Ascending aorta (tissue), 2 donors: ENCODE measurements at regions of chr17 and their contacts with region 1.

Region 1: GRCh38 chr17:27332485-27333409 is 38.8 kb downstream of the WSB1 start:
- DNase-seq: peak; percentile 95 to 99
- H3K4me3 ChIP-seq: peak overlapping the region; percentile 55 to 57
- H3K27ac ChIP-seq: peak overlapping the region; percentile 92 to 93
- H3K4me1 ChIP-seq: peaks cover 0 to 16% of the 10 kb centered on the region in 2 donors
- H3K27me3 ChIP-seq: no peaks in the 10 kb centered on the region
- CTCF ChIP-seq: peak; percentile 84 to 95 (median 87)

Region 2: GRCh38 chr17:27236717-27237315 is 95.9 kb before region 1 on chr17:
- intact Hi-C with region 1: loop called (anchors 1 kb)
- DNase-seq: peak in 1 of 2 donors; percentile 94
- H3K4me3 ChIP-seq: no peak overlapping the region
- H3K27ac ChIP-seq: no peak overlapping the region
- H3K4me1 ChIP-seq: peaks cover 0 to 7% of the 10 kb centered on the region in 2 donors
- H3K27me3 ChIP-seq: no peaks in the 10 kb centered on the region
- CTCF ChIP-seq: peak; percentile 87 to 92 (median 89)

Region 3: GRCh38 chr17:27245230-27245696 is 87.5 kb before region 1 on chr17:
- intact Hi-C with region 1: loop called (anchors 1 kb)
- DNase-seq: peak; percentile 79 to 93
- H3K4me3 ChIP-seq: peak overlapping the region; percentile 52 to 56
- H3K27ac ChIP-seq: peak overlapping the region; percentile 90 to 94
- H3K4me1 ChIP-seq: peaks cover 4 to 37% of the 10 kb centered on the region in 2 donors
- H3K27me3 ChIP-seq: no peaks in the 10 kb centered on the region
- CTCF ChIP-seq: peak; percentile 61 to 76 (median 70)

Region 4: DNA sequence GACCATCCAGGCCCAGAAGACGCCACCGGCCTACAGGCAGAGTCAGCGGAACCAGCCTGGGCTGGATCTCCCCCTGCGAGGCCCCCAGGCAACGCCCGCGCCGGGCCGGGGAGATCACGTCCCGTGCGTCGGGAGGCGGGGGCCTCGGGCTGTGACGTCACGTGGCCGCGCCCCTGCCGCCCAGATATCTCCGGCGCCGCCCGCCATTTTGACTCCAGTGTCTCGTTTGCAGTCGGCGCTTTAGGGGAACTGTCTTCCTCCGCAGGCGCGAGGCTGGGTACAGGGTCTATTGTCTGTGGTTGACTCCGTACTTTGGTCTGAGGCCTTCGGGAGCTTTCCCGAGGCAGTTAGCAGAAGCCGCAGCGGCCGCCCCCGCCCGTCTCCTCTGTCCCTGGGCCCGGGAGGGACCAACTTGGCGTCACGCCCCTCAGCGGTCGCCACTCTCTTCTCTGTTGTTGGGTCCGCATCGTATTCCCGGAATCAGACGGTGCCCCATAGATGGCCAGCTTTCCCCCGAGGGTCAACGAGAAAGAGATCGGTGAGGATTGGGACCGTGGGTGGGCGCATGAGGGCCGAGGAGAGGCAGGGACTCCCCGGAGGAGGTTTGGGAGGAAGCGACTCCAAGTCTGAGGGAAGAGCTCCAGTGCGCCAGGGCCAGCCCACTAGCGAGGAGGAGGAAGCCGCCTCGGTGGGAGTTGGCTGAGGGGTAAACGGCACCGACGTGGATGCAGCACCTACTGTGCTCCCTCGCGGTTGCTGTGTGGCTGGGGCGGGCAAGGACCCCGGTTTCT is 38.7 kb before region 1 on chr17 and contains the start of gene WSB1:
- intact Hi-C with region 1: loop called (anchors 1 kb)
- DNase-seq: peak; percentile 78 to 96
- H3K4me3 ChIP-seq: peak within 1 kb of the TSS; percentile 72 to 76
- H3K27ac ChIP-seq: peak within 1 kb of the TSS; percentile 98 to 99
- H3K4me1 ChIP-seq: peaks cover 13 to 28% of the 10 kb centered on the region in 2 donors
- H3K27me3 ChIP-seq: no peaks in the 10 kb centered on the region
- CTCF ChIP-seq: no peak
- total RNA-seq, gene WSB1: 176 TPM

Region 5: GRCh38 chr17:27315322-27315721 is 17.4 kb before region 1 on chr17:
- intact Hi-C with region 1: loop called (anchors 1 kb)
- DNase-seq: peak; percentile 79 to 94
- H3K4me3 ChIP-seq: no peak overlapping the region
- H3K27ac ChIP-seq: peak overlapping the region; percentile 74 to 76
- H3K4me1 ChIP-seq: peaks cover 0 to 16% of the 10 kb centered on the region in 2 donors
- H3K27me3 ChIP-seq: no peaks in the 10 kb centered on the region
- CTCF ChIP-seq: no peak

Region 6: GRCh38 chr17:27384261-27384711 is 51.5 kb after region 1 on chr17:
- intact Hi-C with region 1: loop called (anchors 1 kb)
- DNase-seq: peak; percentile 60 to 92
- H3K4me3 ChIP-seq: no peak overlapping the region
- H3K27ac ChIP-seq: peak overlapping the region; percentile 62 to 72
- H3K4me1 ChIP-seq: peaks cover 6 to 26% of the 10 kb centered on the region in 2 donors
- H3K27me3 ChIP-seq: no peaks in the 10 kb centered on the region
- CTCF ChIP-seq: peak in 1 of 3 experiments; percentile 11

Region 7: GRCh38 chr17:27455914-27456680 is 123.3 kb after region 1 on chr17 and contains the start of gene KSR1:
- intact Hi-C with region 1: loop called (anchors 1 kb)
- DNase-seq: peak; percentile 49 to 87
- H3K4me3 ChIP-seq: peak within 1 kb of the TSS; percentile 93
- H3K27ac ChIP-seq: peak within 1 kb of the TSS; percentile 90 to 91
- H3K4me1 ChIP-seq: peaks cover 0 to 12% of the 10 kb centered on the region in 2 donors
- H3K27me3 ChIP-seq: no peaks in the 10 kb centered on the region
- CTCF ChIP-seq: peak; percentile 14 to 36 (median 25)
- total RNA-seq, gene KSR1: 42.6 TPM